Right cardiac atrium (tissue), 5 donors: ENCODE measurements at regions of chr15 and their contacts with region 1.

Region 1: DNA sequence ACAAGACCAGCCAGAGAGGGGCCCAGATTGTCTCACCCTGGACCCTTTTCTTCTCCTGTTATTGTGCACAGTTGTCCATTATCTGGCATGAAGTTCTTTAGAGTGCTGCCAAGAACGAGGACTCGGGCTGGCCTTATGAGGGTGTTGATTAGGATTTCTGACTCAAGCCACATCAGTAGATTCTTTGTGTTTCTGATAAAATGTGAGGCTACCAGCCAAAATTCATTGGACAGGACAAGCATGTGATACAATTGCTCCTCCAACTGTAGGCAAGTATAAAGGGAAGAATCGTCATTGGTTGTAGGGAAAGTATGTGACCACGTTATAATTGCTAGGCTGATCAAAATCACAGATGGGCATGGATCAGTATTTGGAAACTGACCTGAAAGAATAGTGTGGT is 99.2 kb upstream of the TMC3 start:
- DNase-seq: peak in 1 of 3 donors; percentile 47
- ATAC-seq: peak; percentile 44 to 67
- H3K4me3 ChIP-seq: no peak overlapping the region
- H3K27ac ChIP-seq: no peak overlapping the region
- H3K4me1 ChIP-seq: no peaks in the 10 kb centered on the region
- H3K27me3 ChIP-seq: no peaks in the 10 kb centered on the region

Region 2: DNA sequence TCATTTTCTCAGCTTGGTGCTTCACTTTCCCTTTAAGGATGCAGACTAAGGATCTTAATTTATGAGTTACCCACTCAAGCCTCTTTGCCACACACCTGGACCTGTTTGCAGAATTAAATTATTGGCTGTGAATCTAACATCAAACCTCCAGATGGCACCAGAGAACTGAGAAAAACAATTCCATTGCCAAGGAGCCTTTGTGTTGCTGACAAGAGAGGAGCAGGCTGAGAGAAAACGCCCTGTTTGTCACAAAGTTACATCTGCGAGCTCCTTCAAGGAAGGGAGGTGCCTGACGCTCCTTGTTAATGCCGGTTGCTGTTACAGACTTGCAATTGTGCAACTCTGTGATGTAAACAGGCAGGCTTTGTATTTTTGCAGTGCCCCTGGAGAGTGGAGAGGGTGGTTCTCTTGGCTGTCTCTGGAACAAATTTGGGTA is 62.8 kb before region 1 on chr15:
- intact Hi-C with region 1: no loop called
- DNase-seq: peak; percentile 64 to 84 (median 72)
- ATAC-seq: peak; percentile 93 to 96
- H3K4me3 ChIP-seq: no peak overlapping the region
- H3K27ac ChIP-seq: no peak overlapping the region
- H3K4me1 ChIP-seq: no peaks in the 10 kb centered on the region
- H3K27me3 ChIP-seq: no peaks in the 10 kb centered on the region

Region 3: GRCh38 chr15:82046666-82047452 is 573.7 kb after region 1 on chr15:
- intact Hi-C with region 1: loop called in 1 of 4 experiments (anchors 10 kb)
- DNase-seq: peak; percentile 91 to 97 (median 97)
- ATAC-seq: peak; percentile 84 to 91
- H3K4me3 ChIP-seq: peak overlapping the region; percentile 79
- H3K27ac ChIP-seq: peak overlapping the region; percentile 96
- H3K4me1 ChIP-seq: no peaks in the 10 kb centered on the region
- H3K27me3 ChIP-seq: no peaks in the 10 kb centered on the region